RWPE1 (cell line): ENCODE measurements at regions of chr1 and their contacts with region 1.

Region 1: DNA sequence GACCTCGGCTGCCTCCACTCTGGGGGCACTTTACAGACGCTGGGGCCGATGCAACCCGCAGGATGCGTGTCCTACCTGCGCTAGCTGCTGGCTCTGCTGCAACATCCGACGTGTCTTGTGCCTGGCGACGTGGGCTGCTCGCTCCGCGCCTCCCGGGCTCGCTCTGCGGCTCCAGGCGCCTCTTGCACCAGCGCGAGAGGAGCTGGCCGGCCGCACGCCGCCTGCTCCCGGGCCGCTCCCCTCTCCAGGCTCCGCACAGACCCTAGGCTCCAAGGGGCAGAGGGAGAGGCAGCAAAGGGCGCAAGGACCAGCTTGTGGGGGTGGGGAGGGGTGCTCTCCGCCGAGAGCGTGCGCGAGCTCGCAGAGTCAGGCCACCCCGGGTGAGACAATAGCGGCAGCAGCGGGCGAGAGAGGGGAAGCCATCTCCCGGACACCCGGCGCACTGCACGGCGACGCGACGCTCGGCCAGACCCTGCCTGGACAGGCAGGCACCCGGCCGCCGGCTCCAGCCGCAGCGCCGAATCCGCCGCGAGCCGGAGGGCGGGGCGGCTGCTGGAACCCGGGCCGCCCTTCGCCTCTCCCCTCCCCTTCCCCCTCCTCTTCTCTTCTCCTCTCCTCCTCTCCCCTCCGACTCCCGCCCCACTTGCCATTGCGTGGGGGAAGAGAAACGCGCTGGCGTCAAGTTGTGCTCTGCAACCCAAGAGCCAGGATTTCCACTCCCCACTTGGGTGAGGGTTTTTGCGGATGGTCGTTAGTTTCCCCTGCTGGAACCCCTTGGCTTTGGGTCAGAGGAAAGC is at the start of gene PIK3C2B:
- DNase-seq: peak; percentile 97
- H3K27ac ChIP-seq: peak within 1 kb of the TSS; percentile 94
- CTCF ChIP-seq: peak; percentile 58

Region 2: GRCh38 chr1:204446370-204447111 is 47.9 kb before region 1 on chr1:
- CTCF ChIA-PET with region 1: interaction called, 24 read pairs
- POLR2A ChIA-PET with region 1: interaction called, 4 read pairs
- DNase-seq: peak; percentile 67
- H3K27ac ChIP-seq: peak overlapping the region; percentile 48; the same call in 1 of the 2 replicates
- CTCF ChIP-seq: peak; percentile 37

Region 3: DNA sequence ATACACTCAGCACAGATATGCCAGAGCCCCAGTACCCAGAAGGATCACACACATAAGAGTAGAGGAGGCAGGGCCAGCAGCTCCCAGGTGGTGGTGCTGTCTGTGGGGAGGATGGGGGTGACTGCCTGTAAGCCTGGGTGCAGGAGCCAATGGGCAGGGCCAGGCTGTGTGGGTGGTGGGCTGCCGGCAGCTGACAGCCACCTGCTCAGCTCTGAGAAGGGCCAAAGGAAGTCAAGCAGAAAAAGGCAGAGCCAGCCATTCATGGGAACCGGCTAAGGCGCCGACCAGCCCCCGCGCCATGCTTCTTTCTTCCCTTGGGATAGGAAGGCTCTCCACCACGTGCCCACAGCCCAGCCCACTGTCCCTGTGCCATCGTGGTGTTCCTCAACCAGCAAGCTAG is 14.0 kb before region 1 on chr1:
- CTCF ChIA-PET with region 1: interaction called, 37 read pairs
- POLR2A ChIA-PET with region 1: interaction called, 10 read pairs
- DNase-seq: no peak
- H3K27ac ChIP-seq: no peak overlapping the region
- CTCF ChIP-seq: no peak